GM23248 (cell line): ENCODE measurements at regions of chr19 and their contacts with region 1.

Region 1: DNA sequence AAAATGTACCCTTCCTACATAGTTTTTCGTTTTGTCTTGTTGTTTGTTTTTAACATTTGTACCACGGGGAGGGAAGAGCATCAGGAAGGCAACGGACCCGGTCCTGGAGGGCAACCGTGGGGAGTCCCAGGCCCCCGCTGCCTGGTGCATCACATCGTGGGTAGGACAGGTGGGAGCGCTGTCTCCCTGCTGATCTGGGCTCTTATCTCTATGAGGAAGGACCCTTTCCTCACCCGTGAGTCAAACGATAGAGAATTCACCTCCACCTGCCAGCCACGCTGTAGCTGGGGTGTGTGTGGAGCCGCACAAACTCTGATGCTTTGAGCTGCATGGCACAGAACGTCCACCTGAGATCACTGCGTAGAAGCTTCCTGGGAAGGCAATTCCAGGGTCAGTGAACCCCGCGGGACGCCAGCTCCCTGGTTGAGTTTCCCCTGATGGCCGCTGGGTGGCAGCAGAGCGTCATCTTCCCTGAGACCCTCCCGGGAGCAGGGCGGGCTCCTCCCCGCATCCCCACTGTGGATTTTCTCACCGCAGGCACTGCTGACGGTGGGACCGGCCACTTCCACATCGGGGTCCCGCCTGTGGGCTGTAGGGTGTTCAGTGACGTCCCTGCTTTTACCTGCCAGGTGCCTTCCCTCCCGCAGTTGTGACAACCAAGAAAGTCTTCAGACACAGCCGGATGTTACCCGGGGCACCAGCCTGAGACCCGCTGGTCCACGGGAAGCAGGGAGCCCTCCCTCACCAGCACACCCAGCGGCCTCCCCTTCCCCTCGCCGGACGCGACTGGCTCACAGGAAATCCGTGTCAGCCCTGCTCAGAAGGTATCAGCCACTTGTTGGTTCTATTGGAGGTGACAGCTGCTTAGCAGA is 54.7 kb downstream of the ZNF787 start:
- DNase-seq: peak; percentile 61
- H3K4me3 ChIP-seq: 0 out of 2 replicates have a peak overlapping the region, but pooled peaks have one; percentile 40
- H3K27ac ChIP-seq: no peak overlapping the region
- H3K4me1 ChIP-seq: no peaks in the 10 kb centered on the region
- H3K27me3 ChIP-seq: no peaks in the 10 kb centered on the region

Region 2: GRCh38 chr19:56170261-56170660 is 103.9 kb after region 1 on chr19:
- in situ Hi-C with region 1: loop called (anchors 5 kb)
- DNase-seq: peak; percentile 33
- H3K4me3 ChIP-seq: no peak overlapping the region
- H3K27ac ChIP-seq: no peak overlapping the region
- H3K4me1 ChIP-seq: no peaks in the 10 kb centered on the region
- H3K27me3 ChIP-seq: 0 out of 2 replicates have a peak, but pooled peaks cover 4% of the 10 kb centered on the region

Region 3: DNA sequence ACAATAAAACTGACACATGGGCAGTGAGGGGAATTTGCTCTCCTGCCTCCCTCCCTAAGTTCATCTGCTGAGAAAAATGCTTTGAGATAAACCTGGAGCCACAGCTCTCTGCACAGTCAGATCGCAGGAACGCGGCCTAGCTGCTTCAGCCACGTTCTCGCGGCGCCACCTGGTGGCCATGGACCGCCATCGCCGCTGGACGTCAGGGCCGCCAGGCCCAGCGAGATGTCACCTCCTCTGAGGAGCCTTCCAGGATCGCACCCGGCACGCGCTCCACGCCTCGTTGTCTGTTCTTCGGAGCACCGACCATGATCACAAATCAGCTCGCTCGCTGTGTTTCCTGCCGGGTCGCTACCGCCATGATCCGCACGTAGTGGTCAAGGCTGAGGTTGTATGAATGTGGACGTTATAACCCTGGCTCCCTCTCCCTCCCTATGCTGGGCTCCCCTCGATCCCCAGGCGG is 1032.8 kb after region 1 on chr19:
- in situ Hi-C with region 1: loop called (anchors 25 kb)
- DNase-seq: peak; percentile 86
- H3K4me3 ChIP-seq: no peak overlapping the region
- H3K27ac ChIP-seq: no peak overlapping the region
- H3K4me1 ChIP-seq: no peaks in the 10 kb centered on the region
- H3K27me3 ChIP-seq: no peaks in the 10 kb centered on the region